Activated CD4-positive, alpha-beta T cell treated with anti-CD3 and anti-CD28 coated beads for 36 hours (primary cell): ENCODE measurements at regions of chr19 and their contacts with region 1.

Region 1: GRCh38 chr19:21358768-21359451 is at the start of gene ZNF738:
- DNase-seq: peak; percentile 94
- ATAC-seq: peak; percentile 98
- H3K4me3 Mint-ChIP-seq: peak within 1 kb of the TSS; percentile 99
- H3K27ac Mint-ChIP-seq: peak within 1 kb of the TSS; percentile 99
- H3K4me1 Mint-ChIP-seq: peaks cover 10% of the 10 kb centered on the region
- H3K27me3 Mint-ChIP-seq: no peaks in the 10 kb centered on the region
- total RNA-seq, gene ZNF738: 15.8 to 19.5 TPM

Region 2: GRCh38 chr19:21260164-21260847 is 98.6 kb before region 1 on chr19:
- CTCF ChIA-PET with region 1: no interaction called
- POLR2A ChIA-PET with region 1: no interaction called
- intact Hi-C with region 1: no loop called
- DNase-seq: no peak
- ATAC-seq: no peak
- H3K4me3 Mint-ChIP-seq: no peak overlapping the region
- H3K27ac Mint-ChIP-seq: no peak overlapping the region
- H3K4me1 Mint-ChIP-seq: no peaks in the 10 kb centered on the region
- H3K27me3 Mint-ChIP-seq: peaks cover 2% of the 10 kb centered on the region

Region 3: GRCh38 chr19:21335721-21336120 is 23.2 kb before region 1 on chr19:
- CTCF ChIA-PET with region 1: no interaction called
- POLR2A ChIA-PET with region 1: no interaction called
- intact Hi-C with region 1: loop called in 1 of 2 experiments (anchors 1 kb)
- DNase-seq: no peak
- ATAC-seq: no peak
- H3K4me3 Mint-ChIP-seq: no peak overlapping the region
- H3K27ac Mint-ChIP-seq: no peak overlapping the region
- H3K4me1 Mint-ChIP-seq: no peaks in the 10 kb centered on the region
- H3K27me3 Mint-ChIP-seq: no peaks in the 10 kb centered on the region

Region 4: DNA sequence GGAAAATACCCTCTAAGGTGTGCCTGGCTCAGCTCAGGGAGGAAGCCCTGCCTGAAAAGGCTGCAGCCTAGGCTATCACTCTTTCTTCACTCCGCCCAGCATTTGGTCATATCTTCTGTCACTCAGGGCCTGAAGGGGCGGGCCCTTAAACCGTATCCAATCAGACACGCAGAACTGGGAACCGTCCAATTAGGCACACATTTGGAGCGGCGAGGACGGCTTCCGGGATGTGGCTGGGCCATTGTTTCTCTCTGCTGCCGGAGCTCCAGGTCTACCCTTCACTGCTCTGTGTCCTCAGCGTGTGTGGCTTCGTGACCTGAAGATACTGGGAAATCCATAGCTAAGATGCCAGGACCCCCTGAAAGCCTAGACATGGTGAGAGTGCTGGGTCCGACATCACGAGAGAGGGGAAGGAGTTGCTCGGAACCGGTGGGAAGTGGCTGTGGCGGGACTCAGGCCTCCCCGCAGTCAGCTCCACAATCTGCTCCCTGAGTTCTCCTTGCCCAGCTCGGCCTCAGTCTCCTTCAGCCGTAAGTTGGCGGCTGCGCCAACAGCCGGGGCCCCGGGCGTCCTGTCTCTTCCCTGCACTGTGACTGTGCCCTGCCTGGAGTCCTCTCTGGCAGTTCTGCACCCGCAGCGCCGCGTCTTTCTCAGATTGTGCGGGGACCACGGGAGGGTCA is 38.1 kb after region 1 on chr19 and contains the start of gene ZNF493:
- CTCF ChIA-PET with region 1: no interaction called
- POLR2A ChIA-PET with region 1: no interaction called
- intact Hi-C with region 1: loop called (anchors 1 to 2 kb)
- DNase-seq: peak; percentile 95
- ATAC-seq: peak; percentile 100
- H3K4me3 Mint-ChIP-seq: peak within 1 kb of the TSS; percentile 98
- H3K27ac Mint-ChIP-seq: peak within 1 kb of the TSS; percentile 92
- H3K4me1 Mint-ChIP-seq: peaks cover 32% of the 10 kb centered on the region
- H3K27me3 Mint-ChIP-seq: no peaks in the 10 kb centered on the region
- total RNA-seq, gene ZNF493: 11.9 to 12.8 TPM

Region 5: GRCh38 chr19:21474671-21475181 is 115.8 kb after region 1 on chr19:
- CTCF ChIA-PET with region 1: interaction called, 4 read pairs
- POLR2A ChIA-PET with region 1: no interaction called
- intact Hi-C with region 1: loop called in 1 of 2 experiments (anchors 2 kb)
- DNase-seq: peak; percentile 93
- ATAC-seq: peak; percentile 100
- H3K4me3 Mint-ChIP-seq: peak overlapping the region; percentile 77
- H3K27ac Mint-ChIP-seq: peak overlapping the region; percentile 65
- H3K4me1 Mint-ChIP-seq: no peaks in the 10 kb centered on the region
- H3K27me3 Mint-ChIP-seq: no peaks in the 10 kb centered on the region

Region 6: DNA sequence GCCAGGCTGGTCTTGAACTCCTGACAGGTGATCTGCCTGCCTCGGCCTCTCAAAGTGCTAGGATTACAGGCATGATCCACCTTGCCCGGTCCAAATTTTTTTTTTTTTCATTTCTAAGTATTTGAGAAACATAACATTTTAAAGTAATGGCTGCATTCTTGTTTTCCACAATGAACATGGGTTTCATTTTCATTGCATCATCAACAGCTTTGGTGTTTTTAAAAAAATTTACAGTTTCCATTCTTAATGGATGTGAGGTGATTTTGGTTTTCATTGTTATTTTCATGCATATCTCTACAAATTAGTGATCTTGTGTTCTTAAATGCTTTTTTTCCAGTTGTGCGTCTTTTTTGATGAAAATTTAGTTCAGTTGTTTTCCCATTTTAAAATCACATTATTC is 174.0 kb after region 1 on chr19:
- CTCF ChIA-PET with region 1: no interaction called
- POLR2A ChIA-PET with region 1: no interaction called
- intact Hi-C with region 1: no loop called
- DNase-seq: no peak
- ATAC-seq: no peak
- H3K4me3 Mint-ChIP-seq: no peak overlapping the region
- H3K27ac Mint-ChIP-seq: no peak overlapping the region
- H3K4me1 Mint-ChIP-seq: no peaks in the 10 kb centered on the region
- H3K27me3 Mint-ChIP-seq: no peaks in the 10 kb centered on the region